HepG2 (cell line): ENCODE measurements at regions of chr2 and their contacts with region 1.

Region 1: GRCh38 chr2:85132834-85133637 is at the start of gene TCF7L1:
- DNase-seq: peak; percentile 35
- ATAC-seq: peak; percentile 91
- H3K4me3 ChIP-seq: peak within 1 kb of the TSS; percentile 56 to 75 (median 65)
- H3K27ac ChIP-seq: no peak within 1 kb of the TSS
- H3K4me1 ChIP-seq: peaks cover 13% of the 10 kb centered on the region
- H3K27me3 ChIP-seq: peaks cover 9 to 61% of the 10 kb centered on the region in 2 experiments
- CTCF ChIP-seq: peak; percentile 89
- EP300 ChIP-seq: no peak
- POLR2A ChIP-seq: no peak
- RAD21 ChIP-seq: peak; percentile 87
- total RNA-seq, gene TCF7L1: 0.04 and 0.08 TPM in 2 replicates

Region 2: DNA sequence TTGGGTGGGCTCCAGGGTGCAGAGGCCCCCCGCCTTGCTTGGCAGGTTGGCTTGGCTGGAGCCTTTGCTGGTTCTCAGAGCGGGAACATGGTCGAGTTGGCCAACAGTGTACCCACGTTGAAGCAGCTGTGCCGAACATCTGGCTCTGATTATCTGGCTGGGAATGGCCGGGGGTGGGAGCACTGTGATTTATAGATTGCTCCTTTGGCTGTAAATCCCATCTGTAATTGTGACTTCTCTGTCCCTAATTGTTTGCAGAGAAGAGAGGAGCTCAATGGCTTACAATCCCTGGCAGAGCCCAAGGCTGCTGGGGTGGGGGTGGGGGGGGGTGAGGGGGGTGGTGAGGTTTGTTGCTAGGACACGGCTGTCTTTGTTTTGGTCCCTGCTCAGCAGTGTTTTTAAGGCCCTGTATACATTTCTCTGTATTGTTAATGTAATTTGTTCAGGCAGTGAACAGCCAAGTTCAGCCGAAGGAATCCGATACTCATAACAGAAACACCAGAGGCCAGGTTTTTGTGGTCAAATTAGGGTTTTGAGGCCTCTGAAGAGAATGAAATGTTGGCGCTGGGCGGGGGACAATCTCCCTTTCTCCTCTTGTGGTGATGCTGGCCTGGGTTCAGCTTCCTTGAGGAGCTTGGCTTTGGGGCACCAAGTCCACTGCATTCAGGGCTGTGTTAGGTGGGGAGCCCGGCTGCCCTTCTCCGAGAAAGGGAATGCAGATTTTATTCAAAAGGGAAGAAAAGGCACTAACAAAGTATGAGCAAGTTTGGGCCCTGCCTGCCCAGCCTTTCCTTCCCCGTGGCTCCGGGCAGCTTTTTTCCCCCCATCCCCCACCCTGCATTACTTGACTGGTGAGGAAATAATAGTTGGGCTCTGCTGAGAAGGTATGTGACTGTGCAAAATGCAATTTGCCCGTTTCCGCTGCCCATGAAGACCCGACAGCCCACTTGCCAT is 82.7 kb after region 1 on chr2:
- CTCF ChIA-PET with region 1: no interaction called
- POLR2A ChIA-PET with region 1: no interaction called
- in situ Hi-C with region 1: no loop called
- intact Hi-C with region 1: loop called (anchors 1 kb)
- DNase-seq: no peak
- ATAC-seq: no peak
- H3K4me3 ChIP-seq: no peak overlapping the region
- H3K27ac ChIP-seq: no peak overlapping the region
- H3K4me1 ChIP-seq: no peaks in the 10 kb centered on the region
- H3K27me3 ChIP-seq: peaks cover 10 to 49% of the 10 kb centered on the region in 2 experiments; a peak in 4 of 5 replicates
- CTCF ChIP-seq: no peak
- EP300 ChIP-seq: no peak
- POLR2A ChIP-seq: no peak
- RAD21 ChIP-seq: no peak

Region 3: DNA sequence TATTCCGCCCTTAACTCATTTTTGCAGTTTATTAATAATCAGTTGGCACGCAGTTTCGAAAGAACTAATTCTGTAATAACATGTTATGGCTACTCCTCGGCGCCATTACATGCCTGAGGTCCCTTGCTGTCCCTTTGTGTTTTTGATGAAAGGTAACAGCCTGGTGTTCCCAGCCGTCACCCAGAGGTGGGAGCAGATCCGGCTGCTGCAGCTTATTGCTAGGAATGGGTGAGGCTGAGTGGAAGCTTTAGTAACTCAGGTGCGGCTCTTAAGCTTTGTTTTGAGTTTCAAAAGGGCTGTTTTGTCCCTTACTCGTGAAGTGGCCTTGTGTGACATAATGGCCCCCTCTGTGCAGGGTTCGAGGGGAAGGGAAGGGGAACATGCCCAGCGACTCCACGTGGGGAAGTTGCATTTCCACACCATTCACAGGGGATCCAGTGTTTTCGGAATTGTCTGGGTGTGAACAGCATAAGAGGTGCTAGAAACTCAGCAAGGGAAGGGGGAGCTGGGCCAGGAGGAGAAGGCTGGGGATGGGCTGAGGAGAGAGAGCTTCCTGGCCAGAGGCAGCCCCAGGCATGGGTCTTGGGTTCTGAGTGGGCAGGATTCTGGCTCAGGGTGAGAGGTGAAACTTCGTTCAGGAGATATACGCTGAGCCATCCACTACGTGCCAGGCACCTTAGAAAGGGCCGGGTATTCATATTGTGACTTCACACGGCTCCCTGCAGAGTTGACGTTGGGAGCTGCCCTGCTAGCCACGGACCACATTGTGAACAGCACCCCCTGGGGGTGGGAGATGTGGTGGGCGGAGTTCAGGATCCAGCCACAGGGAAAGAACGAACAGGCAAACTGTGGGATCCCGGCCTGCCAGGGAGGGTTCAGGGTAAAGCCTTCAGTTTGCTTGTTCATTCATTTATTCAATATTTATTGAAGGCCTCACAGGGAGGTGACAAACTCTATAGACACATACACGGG is 110.4 kb after region 1 on chr2:
- CTCF ChIA-PET with region 1: interaction called, 8 read pairs
- POLR2A ChIA-PET with region 1: no interaction called
- in situ Hi-C with region 1: no loop called
- intact Hi-C with region 1: loop called (anchors 1 kb)
- DNase-seq: peak; percentile 50
- ATAC-seq: peak; percentile 95
- H3K4me3 ChIP-seq: no peak overlapping the region
- H3K27ac ChIP-seq: no peak overlapping the region
- H3K4me1 ChIP-seq: no peaks in the 10 kb centered on the region
- H3K27me3 ChIP-seq: peaks cover 4 to 49% of the 10 kb centered on the region in 2 experiments; a peak in 4 of 5 replicates
- CTCF ChIP-seq: peak; percentile 85
- EP300 ChIP-seq: no peak
- POLR2A ChIP-seq: no peak
- RAD21 ChIP-seq: peak; percentile 67

Region 4: GRCh38 chr2:85288244-85288725 is 155.2 kb after region 1 on chr2:
- CTCF ChIA-PET with region 1: interaction called, 5 read pairs
- POLR2A ChIA-PET with region 1: no interaction called
- in situ Hi-C with region 1: loop called (anchors 5 kb)
- intact Hi-C with region 1: loop called (anchors 1 kb)
- DNase-seq: no peak
- ATAC-seq: no peak
- H3K4me3 ChIP-seq: no peak overlapping the region
- H3K27ac ChIP-seq: no peak overlapping the region
- H3K4me1 ChIP-seq: peaks cover 13% of the 10 kb centered on the region
- H3K27me3 ChIP-seq: peaks cover 0 to 36% of the 10 kb centered on the region in 2 experiments; a peak in 3 of 5 replicates
- CTCF ChIP-seq: no peak
- EP300 ChIP-seq: no peak
- POLR2A ChIP-seq: no peak
- RAD21 ChIP-seq: no peak

Region 5: GRCh38 chr2:85302121-85302520 is 169.1 kb after region 1 on chr2:
- CTCF ChIA-PET with region 1: interaction called, 19 read pairs
- POLR2A ChIA-PET with region 1: no interaction called
- in situ Hi-C with region 1: no loop called
- intact Hi-C with region 1: no loop called
- DNase-seq: no peak
- ATAC-seq: no peak
- H3K4me3 ChIP-seq: no peak overlapping the region
- H3K27ac ChIP-seq: no peak overlapping the region
- H3K4me1 ChIP-seq: peaks cover 72% of the 10 kb centered on the region
- H3K27me3 ChIP-seq: peaks cover 0 to 11% of the 10 kb centered on the region in 2 experiments; a peak in 3 of 5 replicates
- CTCF ChIP-seq: no peak
- EP300 ChIP-seq: no peak
- POLR2A ChIP-seq: no peak
- RAD21 ChIP-seq: no peak